GM13976 (cell line): ENCODE measurements at regions of chr17 and their contacts with region 1.

Region 1: DNA sequence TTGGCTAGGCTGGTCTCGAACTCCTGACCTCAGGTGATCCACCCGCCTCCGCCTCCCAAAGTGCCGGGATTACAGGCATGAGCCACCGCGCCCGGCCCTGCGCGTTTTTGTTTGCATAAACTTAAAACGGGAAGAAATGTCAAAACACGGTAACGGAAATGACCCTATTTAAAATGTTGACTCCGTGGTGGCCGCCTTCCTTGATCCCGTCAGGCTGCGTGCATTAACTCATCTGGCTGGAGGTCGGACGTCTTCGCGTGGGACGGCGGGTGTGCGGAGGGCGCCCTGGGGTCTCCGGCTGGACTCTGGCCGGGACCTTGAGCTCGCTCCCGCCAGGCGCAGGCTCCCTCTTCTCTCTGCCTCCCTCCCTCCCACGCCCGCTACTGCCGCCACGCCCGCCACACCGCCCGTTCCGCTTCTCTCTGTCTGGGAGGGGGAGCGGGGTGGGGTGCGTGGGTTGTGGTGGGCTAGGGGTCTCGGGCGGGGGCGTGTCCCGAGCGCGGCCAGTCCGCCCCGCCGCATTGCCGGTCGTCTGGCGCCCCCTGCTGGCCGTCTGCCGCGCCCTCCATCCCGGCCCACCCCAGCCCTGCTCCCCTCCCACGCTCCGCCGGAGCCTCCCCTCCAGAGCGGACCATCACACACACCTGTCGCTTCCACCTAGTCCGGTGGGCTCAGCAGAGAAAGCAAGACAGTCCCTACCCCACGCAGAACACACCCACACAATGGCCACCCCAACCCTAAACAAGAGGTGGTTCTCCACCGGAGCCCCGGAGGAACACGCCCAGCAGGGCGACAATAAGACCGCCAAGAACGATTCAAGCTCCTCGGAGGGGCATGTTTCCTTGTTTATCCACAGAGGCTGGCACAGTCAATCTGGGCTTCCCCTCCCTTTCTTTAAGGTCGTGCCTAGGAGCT is 1.2 kb upstream of the CCDC42 start:
- DNase-seq: peak; percentile 93
- CTCF ChIP-seq: peak; percentile 89

Region 2: DNA sequence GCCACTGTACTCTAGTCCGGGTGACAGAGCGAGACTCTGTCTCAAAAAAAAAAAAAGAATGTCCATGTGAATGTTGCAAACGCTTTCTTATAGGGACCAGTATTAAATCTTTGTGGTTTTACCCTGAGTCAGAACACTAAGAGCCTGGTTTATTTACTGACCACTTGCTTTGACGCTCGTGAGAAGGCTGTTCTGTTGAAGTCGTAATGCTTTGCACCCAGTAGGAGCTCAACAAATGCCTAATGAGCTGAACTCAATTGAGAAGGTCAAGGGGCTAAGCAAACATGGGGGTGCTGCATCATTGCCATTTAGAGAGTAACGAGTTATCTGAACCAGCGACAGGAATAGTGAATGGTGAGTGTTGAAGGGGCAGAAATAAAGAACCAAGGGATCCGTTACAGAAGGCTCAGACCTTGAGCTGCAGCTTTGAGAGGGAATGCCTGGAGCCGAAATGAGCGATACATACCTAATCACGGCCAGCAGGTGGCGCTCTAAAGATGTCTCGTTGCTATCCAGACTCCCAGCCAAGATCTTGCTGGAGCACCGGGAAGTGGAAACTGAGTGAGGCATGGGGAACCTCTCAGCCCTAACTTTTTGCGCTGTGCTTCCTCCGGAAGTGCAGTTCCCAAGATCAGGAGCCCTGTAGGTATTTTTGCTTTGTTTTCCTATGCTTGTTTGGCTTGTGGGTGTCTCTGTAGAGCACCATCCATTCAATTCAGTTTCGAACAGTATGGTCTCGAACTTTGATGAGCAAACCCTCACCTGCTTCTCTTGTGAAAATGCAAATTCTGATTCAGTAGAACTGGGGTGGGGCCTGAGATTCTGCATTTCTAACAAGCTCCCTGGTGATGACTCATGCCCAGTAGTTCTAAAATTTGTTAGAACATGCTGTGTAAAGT is 335.6 kb before region 1 on chr17:
- in situ Hi-C with region 1: loop called (anchors 10 kb)
- DNase-seq: peak; percentile 77
- CTCF ChIP-seq: peak; percentile 79

Region 3: GRCh38 chr17:9350080-9350479 is 604.2 kb after region 1 on chr17:
- in situ Hi-C with region 1: no loop called
- DNase-seq: no peak
- CTCF ChIP-seq: no peak